ENCODE measurements at regions of chr20 and their contacts with region 1.

Region 1: DNA sequence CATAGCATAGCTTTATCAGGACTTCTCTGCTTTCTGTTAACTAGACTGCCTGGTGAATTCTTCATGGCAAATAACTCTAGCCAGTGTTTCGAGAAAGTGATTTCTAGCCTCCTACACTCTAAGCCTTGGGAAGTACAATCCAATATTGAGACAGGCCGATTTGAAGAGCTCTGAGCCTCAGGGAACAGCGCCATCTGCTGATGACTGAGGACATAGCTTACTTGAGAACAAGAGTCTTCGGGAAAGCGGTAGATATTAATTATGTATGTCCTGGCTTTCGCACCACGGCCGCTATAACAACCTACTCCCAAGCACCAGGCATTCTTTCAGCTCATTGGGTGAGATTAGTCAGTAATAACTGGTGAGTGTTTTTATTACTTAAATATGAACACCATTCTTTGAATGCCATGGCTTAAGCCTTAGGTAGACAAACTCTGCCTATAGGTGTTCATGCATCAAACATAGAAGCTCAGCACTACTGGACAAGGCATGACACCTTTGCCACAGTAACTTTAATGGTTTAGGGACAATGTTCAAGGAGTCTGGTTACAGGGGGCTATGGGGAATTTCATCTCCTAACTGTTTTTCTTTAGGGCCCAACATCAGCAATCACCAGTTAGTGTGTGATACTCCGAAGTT is 518.6 kb downstream of the BMP2 start:
- DNase-seq: peak; percentile 78
- ATAC-seq: peak; percentile 92

Region 2: DNA sequence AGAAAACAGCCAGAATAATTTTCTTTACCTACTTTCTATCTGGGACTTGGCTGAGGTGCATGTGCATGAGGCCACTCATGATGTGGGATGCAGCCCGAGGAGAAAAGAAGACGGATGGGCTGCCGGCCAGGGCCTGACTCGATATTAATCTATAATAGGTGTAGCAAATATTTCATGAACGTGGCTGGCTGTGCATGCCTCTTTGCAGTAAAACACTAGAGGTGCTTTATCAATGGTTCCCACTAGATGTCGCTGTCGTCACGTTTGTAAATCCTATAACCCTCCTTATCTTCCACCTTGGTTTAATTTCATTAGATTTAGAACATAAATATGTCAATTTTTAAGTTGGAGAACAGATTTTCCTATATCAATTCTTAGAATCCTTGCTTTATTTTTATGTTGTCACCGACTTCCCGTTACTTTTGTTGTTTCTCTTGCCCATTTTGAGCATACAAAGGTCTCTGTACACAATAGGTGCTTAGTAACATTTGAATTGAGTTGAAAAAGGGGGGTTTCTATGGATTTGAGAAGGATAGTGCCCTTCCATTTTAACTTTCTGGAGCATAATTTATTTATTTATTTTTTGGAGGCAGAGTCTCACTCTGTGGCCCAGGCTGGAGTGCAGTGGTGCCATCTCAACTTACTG is 1143.6 kb before region 1 on chr20:
- intact Hi-C with region 1: loop called (anchors 10 kb)
- DNase-seq: no peak
- ATAC-seq: peak; percentile 79

Region 3: DNA sequence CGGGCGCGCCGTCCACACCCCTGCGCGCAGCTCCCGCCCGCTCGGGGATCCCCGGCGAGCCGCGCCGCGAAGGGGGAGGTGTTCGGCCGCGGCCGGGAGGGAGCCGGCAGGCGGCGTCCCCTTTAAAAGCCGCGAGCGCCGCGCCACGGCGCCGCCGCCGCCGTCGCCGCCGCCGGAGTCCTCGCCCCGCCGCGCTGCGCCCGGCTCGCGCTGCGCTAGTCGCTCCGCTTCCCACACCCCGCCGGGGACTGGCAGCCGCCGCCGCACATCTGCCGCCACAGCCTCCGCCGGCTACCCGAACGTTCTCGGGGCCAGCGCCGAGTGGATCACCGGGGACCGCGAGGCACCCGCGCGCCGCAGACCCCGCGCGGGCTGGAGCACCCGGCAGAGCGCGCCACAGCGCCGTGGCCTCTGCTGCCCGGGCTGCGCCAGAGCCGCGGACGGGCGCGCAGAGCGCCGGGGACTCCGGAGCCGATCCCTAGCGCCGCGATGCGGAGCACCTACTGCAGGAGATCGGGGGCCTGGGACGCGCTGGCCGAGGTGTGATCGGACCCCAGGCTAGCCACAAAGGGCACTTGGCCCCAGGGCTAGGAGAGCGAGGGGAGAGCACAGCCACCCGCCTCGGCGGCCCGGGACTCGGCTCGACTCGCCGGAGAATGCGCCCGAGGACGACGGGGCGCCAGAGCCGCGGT is 518.4 kb before region 1 on chr20 and contains the start of gene BMP2:
- intact Hi-C with region 1: loop called (anchors 5 kb)
- DNase-seq: peak; percentile 73
- ATAC-seq: peak; percentile 81
- total RNA-seq, gene BMP2: 2.5 TPM

Region 4: GRCh38 chr20:7113577-7114466 is 172.2 kb before region 1 on chr20:
- intact Hi-C with region 1: loop called (anchors 5 kb)
- DNase-seq: peak; percentile 50
- ATAC-seq: peak; percentile 98

Region 5: GRCh38 chr20:7171911-7172310 is 114.1 kb before region 1 on chr20:
- intact Hi-C with region 1: loop called (anchors 10 kb)
- DNase-seq: no peak
- ATAC-seq: no peak

Region 6: GRCh38 chr20:7426890-7427496 is 141.0 kb after region 1 on chr20:
- intact Hi-C with region 1: no loop called
- DNase-seq: no peak
- ATAC-seq: no peak

Region 7: GRCh38 chr20:7650086-7650879 is 364.2 kb after region 1 on chr20:
- intact Hi-C with region 1: no loop called
- DNase-seq: no peak
- ATAC-seq: no peak